Naive thymus-derived CD4-positive, alpha-beta T cell (primary cell): ENCODE measurements at regions of chr1 and their contacts with region 1.

Region 1: DNA sequence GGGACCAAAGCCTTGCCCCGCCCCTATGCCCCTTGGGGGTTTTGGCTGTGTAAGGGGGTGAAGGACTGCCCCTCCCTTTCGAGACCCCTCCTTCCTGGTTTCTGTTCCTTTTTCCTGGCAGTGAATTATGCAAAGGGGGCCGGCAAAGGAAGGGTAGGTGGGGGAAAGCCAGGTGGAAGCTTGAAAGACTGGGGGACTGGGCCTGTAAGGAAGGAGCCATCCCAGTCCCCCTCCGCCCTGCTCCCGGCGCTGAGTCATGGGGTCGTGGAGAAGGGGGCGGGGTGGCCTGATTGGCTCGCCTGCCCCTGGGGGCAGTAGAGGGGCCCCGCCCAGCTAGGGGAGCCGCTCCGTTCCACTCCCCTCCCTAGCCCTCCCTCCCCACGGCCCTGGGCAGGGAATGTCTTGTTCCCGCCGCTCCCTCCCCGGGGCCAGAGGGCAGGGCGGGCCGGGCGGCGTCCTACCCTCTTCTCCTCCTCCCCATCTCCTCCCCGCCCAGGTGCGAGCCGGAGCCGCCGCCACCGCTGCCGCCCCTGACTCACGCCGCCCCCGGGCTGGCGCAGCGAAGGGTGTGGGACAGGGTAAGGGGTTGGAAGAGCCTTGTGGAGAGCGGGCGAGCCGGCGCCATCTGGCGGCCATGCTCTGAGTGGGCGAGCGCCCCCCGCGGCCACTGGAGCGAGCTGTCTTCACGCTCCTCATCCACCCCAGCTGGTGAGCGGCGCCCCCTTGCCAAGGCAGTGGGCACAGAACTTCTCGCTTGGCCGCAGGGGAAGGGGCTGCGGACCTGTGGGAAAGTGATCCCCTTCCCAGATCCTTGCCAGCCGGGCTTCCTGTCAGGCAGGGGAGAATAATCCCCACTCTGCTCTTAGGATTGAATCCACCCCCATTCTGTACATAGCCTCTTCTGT is 14.7 kb downstream of the ZBTB7B start:
- DNase-seq: peak; percentile 85 to 93 (median 89)
- ATAC-seq: peak; percentile 98
- H3K4me3 ChIP-seq: peak overlapping the region; percentile 50
- H3K4me3 Mint-ChIP-seq: peak overlapping the region; percentile 51 to 84 (median 70)
- H3K27ac ChIP-seq: peak overlapping the region; percentile 83
- H3K27ac Mint-ChIP-seq: peak overlapping the region; percentile 38 to 98 (median 94)
- H3K4me1 ChIP-seq: peaks cover 38 to 65% of the 10 kb centered on the region in 2 donors
- H3K4me1 Mint-ChIP-seq: peaks cover 38 to 83% (median 71%) of the 10 kb centered on the region in 7 donors
- H3K27me3 ChIP-seq: no peaks in the 10 kb centered on the region
- H3K27me3 Mint-ChIP-seq: no peaks in the 10 kb centered on the region

Region 2: DNA sequence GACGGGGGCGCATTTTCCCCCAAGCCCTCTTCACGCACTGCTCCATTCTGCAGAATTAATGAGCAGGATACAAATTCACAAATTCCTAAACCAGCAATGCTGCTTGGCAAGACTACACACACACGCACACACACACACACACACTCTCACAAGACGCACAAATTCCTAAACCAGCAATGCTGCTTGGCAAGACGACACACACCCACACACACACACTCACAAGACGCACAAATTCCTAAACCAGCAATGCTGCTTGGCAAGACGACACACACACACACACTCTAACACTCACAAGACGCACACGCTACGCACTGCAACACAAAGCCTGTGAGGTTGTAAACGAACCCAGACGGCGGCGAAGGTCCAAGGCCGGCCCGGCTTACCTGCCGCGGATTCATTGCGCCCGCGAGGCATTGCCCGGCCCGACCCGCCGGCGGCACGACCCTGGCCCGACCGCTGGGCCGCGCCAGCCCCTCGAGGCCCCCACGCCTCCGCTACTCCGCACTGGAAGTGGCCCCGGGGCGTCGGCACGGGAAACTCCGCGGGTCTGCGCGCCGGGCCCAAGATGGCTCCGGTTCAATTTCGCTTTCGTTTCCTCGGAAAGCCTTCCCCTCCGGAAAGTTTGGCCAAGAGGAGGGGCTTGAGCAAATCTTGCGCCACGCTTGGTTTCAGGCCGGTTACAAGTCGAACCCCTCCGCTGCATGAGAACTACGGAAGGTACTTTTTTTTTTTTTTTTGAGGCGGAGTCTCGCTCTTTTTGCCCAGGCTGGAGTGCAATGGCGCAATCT is 409.5 kb before region 1 on chr1 and contains the start of gene ADAR:
- CTCF ChIA-PET with region 1: no interaction called
- POLR2A ChIA-PET with region 1: no interaction called
- intact Hi-C with region 1: loop called in 1 of 2 experiments (anchors 5 kb)
- DNase-seq: peak; percentile 67 to 95 (median 90)
- ATAC-seq: peak; percentile 92
- H3K4me3 ChIP-seq: peak within 1 kb of the TSS; percentile 78
- H3K4me3 Mint-ChIP-seq: peak within 1 kb of the TSS; percentile 91 to 100 (median 98)
- H3K27ac ChIP-seq: peak within 1 kb of the TSS; percentile 97
- H3K27ac Mint-ChIP-seq: peak within 1 kb of the TSS; percentile 94 to 99 (median 99)
- H3K4me1 ChIP-seq: peaks cover 40 to 42% of the 10 kb centered on the region in 2 donors
- H3K4me1 Mint-ChIP-seq: peaks cover 63 to 90% (median 75%) of the 10 kb centered on the region in 7 donors
- H3K27me3 ChIP-seq: no peaks in the 10 kb centered on the region
- H3K27me3 Mint-ChIP-seq: no peaks in the 10 kb centered on the region
- total RNA-seq, gene ADAR: 206 to 408 (median 237) TPM

Region 3: GRCh38 chr1:154943649-154944400 is 73.5 kb before region 1 on chr1:
- CTCF ChIA-PET with region 1: interaction called, 101 read pairs
- POLR2A ChIA-PET with region 1: interaction called, 6 read pairs
- intact Hi-C with region 1: no loop called
- DNase-seq: peak in 1 of 9 donors; percentile 57
- ATAC-seq: peak; percentile 43
- H3K4me3 ChIP-seq: no peak overlapping the region
- H3K4me3 Mint-ChIP-seq: peak overlapping the region in 6 of 10 donors; percentile 7 to 67 (median 26)
- H3K27ac ChIP-seq: peak overlapping the region; percentile 65
- H3K27ac Mint-ChIP-seq: peak overlapping the region; percentile 52 to 95 (median 88)
- H3K4me1 ChIP-seq: peaks cover 38 to 42% of the 10 kb centered on the region in 2 donors
- H3K4me1 Mint-ChIP-seq: peaks cover 43 to 60% (median 52%) of the 10 kb centered on the region in 7 donors
- H3K27me3 ChIP-seq: no peaks in the 10 kb centered on the region
- H3K27me3 Mint-ChIP-seq: no peaks in the 10 kb centered on the region

Region 4: DNA sequence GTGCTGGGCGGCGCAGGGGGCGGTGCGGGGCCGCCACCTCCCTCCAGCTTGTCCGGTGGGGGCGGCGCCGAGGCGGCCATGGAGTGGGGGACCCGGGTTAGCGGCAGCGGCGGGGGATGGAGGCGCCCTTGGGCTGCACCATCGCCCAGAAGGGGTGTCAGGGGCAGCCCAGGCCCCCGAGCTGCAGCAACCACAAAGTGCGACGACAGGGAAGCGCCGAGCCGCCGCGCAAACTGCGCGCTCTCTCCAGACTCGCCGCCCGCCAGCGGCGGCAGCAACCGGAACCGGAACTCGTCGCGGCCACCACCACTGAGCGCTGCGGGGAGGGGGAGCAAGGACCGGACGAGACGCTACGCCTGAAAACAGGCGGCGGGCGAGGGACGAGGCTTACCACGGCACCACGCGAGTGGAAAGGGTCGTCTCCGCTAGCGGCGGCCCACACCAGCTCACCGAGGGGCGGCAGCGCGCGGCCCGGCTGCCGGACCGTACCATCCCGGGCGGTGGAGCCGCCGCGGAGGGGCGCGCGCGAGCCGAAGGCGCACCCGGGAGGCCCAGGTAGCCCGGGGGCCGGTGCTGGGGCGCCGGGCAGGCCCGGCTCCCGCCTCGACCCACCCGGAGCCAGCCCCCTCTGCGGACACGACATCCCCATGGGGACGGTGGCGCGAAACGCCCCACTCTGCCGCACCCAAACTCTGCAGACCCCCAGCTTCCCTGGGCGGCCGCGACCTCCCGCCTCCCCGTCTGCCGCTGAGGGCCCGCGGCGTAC is 55.6 kb before region 1 on chr1 and contains the start of gene PYGO2:
- CTCF ChIA-PET with region 1: interaction called, 101 read pairs
- POLR2A ChIA-PET with region 1: interaction called, 136 read pairs
- intact Hi-C with region 1: loop called (anchors 1 kb)
- DNase-seq: peak; percentile 72 to 88 (median 78)
- ATAC-seq: peak; percentile 86
- H3K4me3 ChIP-seq: peak within 1 kb of the TSS; percentile 54
- H3K4me3 Mint-ChIP-seq: peak within 1 kb of the TSS; percentile 91 to 98 (median 94)
- H3K27ac ChIP-seq: peak within 1 kb of the TSS; percentile 96
- H3K27ac Mint-ChIP-seq: peak within 1 kb of the TSS; percentile 83 to 100 (median 95)
- H3K4me1 ChIP-seq: peaks cover 18 to 26% of the 10 kb centered on the region in 2 donors
- H3K4me1 Mint-ChIP-seq: peaks cover 16 to 58% (median 46%) of the 10 kb centered on the region in 7 donors
- H3K27me3 ChIP-seq: no peaks in the 10 kb centered on the region
- H3K27me3 Mint-ChIP-seq: no peaks in the 10 kb centered on the region
- total RNA-seq, gene PYGO2: 33.0 to 69.5 (median 46.2) TPM

Region 5: GRCh38 chr1:154974063-154974807 is 43.1 kb before region 1 on chr1 and contains the start of gene CKS1B:
- CTCF ChIA-PET with region 1: interaction called, 94 read pairs
- POLR2A ChIA-PET with region 1: interaction called, 37 read pairs
- intact Hi-C with region 1: loop called (anchors 1 kb)
- DNase-seq: peak; percentile 86 to 100 (median 98)
- ATAC-seq: peak; percentile 89
- H3K4me3 ChIP-seq: peak within 1 kb of the TSS; percentile 82
- H3K4me3 Mint-ChIP-seq: no peak within 1 kb of the TSS
- H3K27ac ChIP-seq: peak within 1 kb of the TSS; percentile 94
- H3K27ac Mint-ChIP-seq: no peak within 1 kb of the TSS
- H3K4me1 ChIP-seq: peaks cover 28 to 35% of the 10 kb centered on the region in 2 donors
- H3K4me1 Mint-ChIP-seq: peaks cover 27 to 39% (median 31%) of the 10 kb centered on the region in 7 donors
- H3K27me3 ChIP-seq: no peaks in the 10 kb centered on the region
- H3K27me3 Mint-ChIP-seq: no peaks in the 10 kb centered on the region
- total RNA-seq, gene CKS1B: 8.4 to 105 (median 10.2) TPM

Region 6: DNA sequence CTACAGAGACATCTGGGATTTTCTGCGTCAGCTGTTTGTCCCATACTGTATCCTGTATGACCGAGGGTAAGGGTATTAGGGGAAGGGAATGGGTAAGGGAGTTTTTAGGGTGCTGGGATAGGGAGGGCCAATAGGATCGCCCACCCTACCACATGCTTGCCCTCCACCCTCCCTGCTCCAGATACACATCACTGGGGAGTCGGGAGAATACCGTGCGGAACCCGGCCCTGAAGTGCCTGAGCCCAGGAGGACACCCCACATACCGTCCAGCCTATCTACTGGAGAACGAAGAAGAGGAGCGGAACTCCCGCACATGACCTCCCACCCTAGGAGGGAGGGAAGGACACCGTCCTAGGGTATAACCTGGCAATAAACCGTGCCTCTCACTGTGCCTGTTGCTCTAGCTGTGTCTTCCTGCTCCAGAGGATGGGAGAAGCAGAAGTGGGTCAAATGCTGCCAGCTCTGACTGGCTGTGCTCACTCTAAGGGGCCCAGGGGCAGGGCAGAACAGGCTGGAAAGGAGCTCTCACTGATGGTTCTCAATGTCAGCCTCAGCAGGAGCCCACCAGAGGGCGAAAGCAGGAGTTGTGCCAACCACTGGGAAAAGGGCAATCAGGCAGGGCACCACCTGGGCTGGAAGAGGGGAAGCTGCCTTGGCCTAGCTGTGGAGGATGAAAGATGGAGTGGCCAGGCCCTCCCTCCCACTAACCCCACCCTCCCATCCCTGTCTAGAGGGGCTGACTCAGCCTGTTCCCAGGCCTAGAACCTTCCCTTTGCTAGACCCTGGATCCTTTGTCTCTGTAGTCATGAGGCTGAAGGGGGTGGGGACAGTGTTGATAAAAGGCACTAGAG is 24.3 kb before region 1 on chr1:
- CTCF ChIA-PET with region 1: interaction called, 291 read pairs
- POLR2A ChIA-PET with region 1: interaction called, 270 read pairs
- intact Hi-C with region 1: loop called in 1 of 2 experiments (anchors 1 kb)
- DNase-seq: no peak
- ATAC-seq: no peak
- H3K4me3 ChIP-seq: no peak overlapping the region
- H3K4me3 Mint-ChIP-seq: no peak overlapping the region
- H3K27ac ChIP-seq: no peak overlapping the region
- H3K27ac Mint-ChIP-seq: no peak overlapping the region
- H3K4me1 ChIP-seq: peaks cover 5 to 8% of the 10 kb centered on the region in 2 donors
- H3K4me1 Mint-ChIP-seq: peaks cover 16 to 35% (median 28%) of the 10 kb centered on the region in 7 donors
- H3K27me3 ChIP-seq: no peaks in the 10 kb centered on the region
- H3K27me3 Mint-ChIP-seq: no peaks in the 10 kb centered on the region